ENCODE measurements at regions of chr20 and their contacts with region 1.

Region 1: GRCh38 chr20:407133-407952 is 756 bp upstream of the RBCK1 start:
- DNase-seq: peak; percentile 92
- ATAC-seq: peak; percentile 79

Region 2: DNA sequence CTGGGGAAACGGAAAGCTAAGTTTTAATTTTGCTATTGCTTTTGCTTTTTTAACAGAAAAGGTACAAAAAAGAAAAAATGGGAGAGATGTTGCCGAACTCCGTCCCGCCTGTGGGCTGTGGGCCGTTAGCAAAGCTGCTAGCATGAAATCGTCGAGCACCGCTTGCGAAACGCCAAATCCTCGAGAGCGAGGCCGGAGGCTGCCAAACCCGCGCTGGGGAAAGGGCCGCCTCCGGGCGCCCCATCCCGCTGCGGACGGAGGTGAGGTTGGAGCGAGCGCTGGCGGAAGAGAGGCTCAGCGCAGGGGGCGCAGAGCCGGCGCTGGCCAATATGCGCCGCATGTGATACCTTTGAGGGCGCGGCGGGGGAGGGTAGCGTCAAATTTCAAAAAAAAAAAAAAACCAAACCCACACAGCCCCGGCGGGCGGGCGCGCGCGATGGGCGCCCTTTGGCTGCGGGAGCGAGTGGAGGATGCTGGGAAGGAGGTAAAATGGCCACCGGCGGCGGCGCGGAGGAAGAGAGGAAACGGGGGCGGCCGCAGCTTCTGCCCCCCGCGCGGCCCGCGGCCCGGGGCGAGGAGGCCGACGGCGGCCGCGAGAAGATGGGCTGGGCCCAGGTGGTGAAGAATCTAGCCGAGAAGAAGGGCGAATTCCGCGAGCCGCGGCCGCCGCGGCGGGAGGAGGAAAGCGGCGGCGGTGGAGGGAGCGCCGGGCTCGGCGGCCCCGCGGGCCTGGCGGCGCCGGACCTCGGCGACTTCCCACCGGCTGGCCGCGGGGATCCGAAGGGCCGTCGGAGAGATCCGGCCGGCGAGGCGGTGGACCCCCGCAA is 110.0 kb before region 1 on chr20 and contains the start of gene ZCCHC3:
- intact Hi-C with region 1: no loop called
- DNase-seq: peak; percentile 95
- ATAC-seq: peak; percentile 96
- total RNA-seq, gene ZCCHC3: 11.0 TPM

Region 3: DNA sequence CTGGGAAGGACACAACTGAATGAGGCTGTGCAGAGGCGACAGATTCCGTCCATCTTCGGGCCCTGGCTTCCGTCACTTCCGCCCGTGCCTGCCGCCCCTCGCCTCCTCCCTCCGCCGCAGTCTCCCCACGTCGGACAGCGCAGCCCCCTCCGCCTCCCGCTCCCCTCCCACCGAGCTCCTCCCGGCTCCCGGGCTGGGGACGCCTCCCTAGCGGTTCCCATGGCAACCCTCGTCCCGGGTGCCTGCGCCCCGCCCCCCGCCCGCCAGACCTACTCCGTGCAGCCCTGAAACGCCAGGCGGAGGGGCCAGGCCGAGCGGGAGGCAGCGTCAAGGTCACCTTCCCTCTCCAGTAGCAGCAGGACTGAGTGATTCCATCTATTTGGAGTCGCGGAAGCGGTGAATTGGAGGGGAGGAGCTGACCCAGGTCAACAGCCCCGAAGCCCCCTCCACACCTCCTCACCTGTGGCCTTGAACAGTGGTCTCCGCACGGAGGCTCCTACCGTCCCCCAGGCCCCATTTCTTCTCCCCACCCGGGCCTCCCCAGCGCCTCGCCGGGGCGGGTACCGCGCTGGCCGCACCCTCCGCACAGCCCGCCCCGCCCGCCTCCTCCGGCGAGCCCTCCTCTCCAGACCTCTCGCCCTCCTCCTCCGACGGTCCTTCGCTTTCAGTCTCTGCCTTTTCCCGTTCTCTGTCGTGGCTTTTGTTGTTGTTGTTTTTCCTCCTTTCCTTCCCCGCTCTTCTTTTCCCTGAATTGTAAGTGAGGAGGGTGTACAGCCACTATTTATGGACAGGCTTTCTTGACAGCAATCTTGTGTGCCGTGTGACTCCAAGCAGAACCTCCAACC is 59.5 kb before region 1 on chr20:
- intact Hi-C with region 1: loop called (anchors 5 kb)
- DNase-seq: peak; percentile 93
- ATAC-seq: peak; percentile 92

Region 4: GRCh38 chr20:362271-363254 is 44.8 kb before region 1 on chr20:
- intact Hi-C with region 1: loop called (anchors 5 kb)
- DNase-seq: peak; percentile 91
- ATAC-seq: peak; percentile 81

Region 5: GRCh38 chr20:462199-462991 is 55.1 kb after region 1 on chr20 and contains the start of gene TBC1D20:
- intact Hi-C with region 1: loop called (anchors 2 kb)
- DNase-seq: peak; percentile 93
- ATAC-seq: peak; percentile 99
- total RNA-seq, gene TBC1D20: 25.2 TPM

Region 6: GRCh38 chr20:483813-484644 is 76.7 kb after region 1 on chr20:
- intact Hi-C with region 1: no loop called
- DNase-seq: peak; percentile 81
- ATAC-seq: peak; percentile 96

Measured in Right ventricle myocardium inferior (tissue), 1 donor.